Activated naive CD4-positive, alpha-beta T cell treated with anti-CD3 and anti-CD28 coated beads for 36 hours (primary cell): ENCODE measurements at regions of chr2 and their contacts with region 1.

Region 1: DNA sequence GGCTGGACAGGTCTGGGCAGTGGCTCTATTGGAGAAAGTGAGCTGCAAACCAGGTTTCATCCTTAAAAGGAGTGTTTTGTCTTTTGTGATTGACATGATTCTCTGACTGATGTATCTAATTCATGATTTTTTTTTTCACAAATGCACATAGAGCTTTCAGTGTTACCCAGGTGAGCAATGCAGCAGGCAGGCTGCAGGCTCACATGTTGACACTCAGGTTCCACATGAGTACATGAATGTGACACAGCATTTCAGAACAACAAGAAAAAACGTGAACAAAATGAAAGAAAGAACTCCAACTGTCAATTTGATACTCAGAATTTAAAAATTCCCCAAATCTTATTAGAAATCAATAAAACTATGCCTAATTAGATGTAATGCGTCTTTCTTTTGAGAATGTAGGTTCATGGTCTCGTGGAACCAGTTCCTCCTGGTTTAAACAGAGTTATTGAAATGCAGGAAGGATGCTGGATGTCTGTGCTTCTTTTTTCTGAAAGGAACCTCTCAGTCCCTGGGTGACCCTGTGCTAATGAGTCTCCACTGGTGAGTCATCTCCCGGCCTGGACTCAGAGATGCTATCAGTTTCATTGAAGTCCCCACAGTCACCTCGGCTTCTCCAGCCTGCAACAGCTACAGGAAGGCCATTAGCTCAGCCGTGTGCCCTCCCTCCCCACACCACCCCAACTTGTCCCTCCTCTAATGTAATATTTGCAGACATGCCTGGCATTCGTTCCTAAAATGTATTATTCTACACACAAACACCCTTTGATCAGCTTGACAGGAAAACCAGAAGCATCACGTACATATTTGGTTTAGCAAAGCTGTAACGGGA is 430.4 kb downstream of the LPIN1 start:
- DNase-seq: peak; percentile 49
- H3K4me3 Mint-ChIP-seq: peak overlapping the region; percentile 11
- H3K27ac Mint-ChIP-seq: no peak overlapping the region
- H3K4me1 Mint-ChIP-seq: peaks cover 40% of the 10 kb centered on the region
- H3K27me3 Mint-ChIP-seq: no peaks in the 10 kb centered on the region

Region 2: DNA sequence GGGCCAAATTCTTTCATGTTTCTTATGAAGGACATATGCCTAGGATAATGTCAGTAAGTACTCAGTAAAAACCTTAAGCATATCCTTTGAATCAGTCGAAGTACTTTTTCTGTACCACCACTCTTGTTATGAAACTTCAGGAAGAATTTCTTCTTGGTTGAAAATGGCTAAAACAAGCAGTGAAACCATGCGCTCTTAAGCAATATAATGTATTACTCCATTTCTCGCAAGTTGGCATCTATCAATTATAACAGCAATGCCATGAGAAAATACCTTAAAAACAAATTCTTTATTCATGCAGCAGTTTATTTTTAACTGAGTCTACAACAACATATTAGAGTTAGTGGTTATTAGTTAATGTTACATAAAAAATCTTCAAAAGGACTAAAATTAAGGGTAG is 980.6 kb before region 1 on chr2:
- CTCF ChIA-PET with region 1: no interaction called
- intact Hi-C with region 1: no loop called
- DNase-seq: no peak
- H3K4me3 Mint-ChIP-seq: no peak overlapping the region
- H3K27ac Mint-ChIP-seq: no peak overlapping the region
- H3K4me1 Mint-ChIP-seq: no peaks in the 10 kb centered on the region
- H3K27me3 Mint-ChIP-seq: no peaks in the 10 kb centered on the region

Region 3: GRCh38 chr2:12222554-12222953 is 45.7 kb after region 1 on chr2:
- CTCF ChIA-PET with region 1: no interaction called
- intact Hi-C with region 1: no loop called
- DNase-seq: no peak
- H3K4me3 Mint-ChIP-seq: no peak overlapping the region
- H3K27ac Mint-ChIP-seq: no peak overlapping the region
- H3K4me1 Mint-ChIP-seq: no peaks in the 10 kb centered on the region
- H3K27me3 Mint-ChIP-seq: no peaks in the 10 kb centered on the region

Region 4: DNA sequence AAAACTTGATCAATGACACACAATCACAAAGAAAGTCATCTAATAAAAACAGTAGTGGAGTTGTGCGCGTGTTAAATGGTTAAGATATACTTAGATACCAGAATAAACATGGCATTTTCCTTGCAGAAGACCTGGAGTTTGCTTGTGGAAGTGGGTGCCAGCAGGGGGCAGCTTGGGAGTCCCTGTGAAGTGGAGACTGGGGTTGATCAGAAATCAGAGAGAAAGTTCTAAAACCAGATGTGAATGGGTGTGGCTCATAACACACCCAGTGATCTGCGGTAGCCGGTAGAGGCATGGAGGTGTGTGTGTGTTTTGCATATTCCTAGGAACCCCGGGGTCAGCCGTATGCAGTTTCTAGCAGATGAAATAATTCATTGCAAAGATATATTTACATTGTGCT is 239.8 kb after region 1 on chr2:
- CTCF ChIA-PET with region 1: no interaction called
- intact Hi-C with region 1: loop called (anchors 5 kb)
- DNase-seq: peak; percentile 72
- H3K4me3 Mint-ChIP-seq: no peak overlapping the region
- H3K27ac Mint-ChIP-seq: no peak overlapping the region
- H3K4me1 Mint-ChIP-seq: peaks cover 34% of the 10 kb centered on the region
- H3K27me3 Mint-ChIP-seq: no peaks in the 10 kb centered on the region

Region 5: DNA sequence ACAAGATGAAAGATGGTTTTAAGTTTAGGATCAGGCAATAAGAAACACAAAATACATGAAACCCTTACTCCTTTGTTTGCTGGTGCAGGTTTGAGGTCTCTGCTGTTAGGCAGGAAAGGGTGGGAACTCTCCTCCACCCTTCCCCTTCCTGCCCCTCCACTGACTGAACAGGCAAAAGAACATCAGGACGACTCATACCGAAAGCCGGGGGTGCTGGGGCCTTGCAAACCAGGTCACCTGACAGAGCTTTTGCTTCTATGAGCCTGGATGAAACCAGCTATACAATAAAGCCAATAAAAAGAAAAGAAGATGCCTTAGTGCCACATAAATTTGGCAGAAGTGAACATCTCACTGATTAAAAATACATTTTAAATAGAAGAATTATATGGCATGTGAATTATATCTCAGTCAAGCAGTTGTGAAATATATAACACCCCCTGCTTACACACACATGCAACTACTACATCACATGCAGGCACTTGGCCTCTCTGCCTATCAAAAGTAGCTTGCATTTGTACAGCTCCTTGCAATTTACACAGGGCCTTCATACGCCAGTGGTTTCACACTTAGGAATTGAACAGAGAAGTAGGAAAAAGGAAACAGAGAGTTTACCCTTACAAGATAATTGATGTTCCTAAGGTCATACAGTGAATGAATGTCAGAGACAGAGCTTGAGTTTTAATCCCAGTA is 324.8 kb after region 1 on chr2:
- CTCF ChIA-PET with region 1: no interaction called
- intact Hi-C with region 1: loop called (anchors 5 kb)
- DNase-seq: peak; percentile 88
- H3K4me3 Mint-ChIP-seq: no peak overlapping the region
- H3K27ac Mint-ChIP-seq: peak overlapping the region; percentile 47
- H3K4me1 Mint-ChIP-seq: peaks cover 91% of the 10 kb centered on the region
- H3K27me3 Mint-ChIP-seq: no peaks in the 10 kb centered on the region